Caco-2 (cell line): ENCODE measurements at regions of chr2 and their contacts with region 1.

Region 1: GRCh38 chr2:186589612-186590349 is at the start of gene ITGAV:
- DNase-seq: peak; percentile 96 to 98
- H3K4me3 ChIP-seq: peak within 1 kb of the TSS; percentile 98
- H3K4me3 Mint-ChIP-seq: peak within 1 kb of the TSS; percentile 86
- H3K27ac Mint-ChIP-seq: peak within 1 kb of the TSS; percentile 46
- H3K4me1 ChIP-seq: peaks cover 25% of the 10 kb centered on the region
- H3K4me1 Mint-ChIP-seq: peaks cover 28% of the 10 kb centered on the region
- H3K27me3 ChIP-seq: no peaks in the 10 kb centered on the region
- H3K27me3 Mint-ChIP-seq: no peaks in the 10 kb centered on the region
- CTCF ChIP-seq: no peak
- total RNA-seq, gene ITGAV: 42.6 and 49.5 TPM in 2 replicates

Region 2: DNA sequence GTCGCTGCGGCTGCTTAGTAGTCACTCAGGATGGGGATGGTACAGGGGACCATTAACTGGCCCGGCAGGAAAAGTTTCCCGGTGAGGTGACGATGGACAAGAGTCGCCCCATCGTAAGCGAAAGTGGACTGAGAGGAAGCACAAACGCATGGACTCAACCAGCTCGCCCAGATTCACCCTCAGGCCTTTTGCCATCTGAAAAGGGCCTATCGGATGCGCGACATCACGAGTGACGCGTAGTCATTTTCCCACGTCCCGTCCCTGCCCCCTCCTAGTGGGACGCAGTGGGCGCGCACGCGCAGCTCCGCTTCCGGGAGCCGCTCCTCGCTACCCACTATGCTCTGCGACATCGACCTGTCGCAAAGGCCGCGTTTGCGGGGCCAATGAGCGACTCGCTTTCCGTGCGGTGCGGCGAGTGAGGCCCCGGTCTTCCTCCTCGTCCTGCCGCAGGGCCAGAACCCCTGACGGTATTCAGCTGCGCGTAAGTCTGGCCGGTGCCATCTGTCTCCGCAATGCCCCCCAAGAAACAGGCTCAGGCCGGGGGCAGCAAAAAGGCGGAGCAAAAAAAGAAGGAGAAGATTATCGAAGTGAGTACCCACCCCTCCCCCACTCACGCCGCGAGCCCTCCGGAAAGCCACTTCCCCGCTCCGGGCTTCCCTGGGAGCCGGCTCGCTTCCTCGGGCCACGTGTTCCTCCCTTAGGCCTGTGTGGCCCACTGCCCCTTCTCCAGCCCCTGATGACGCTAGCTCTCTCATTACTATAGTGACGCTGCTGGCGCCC is 103.7 kb before region 1 on chr2 and contains the start of gene ZC3H15:
- CTCF ChIA-PET with region 1: interaction called, 4 read pairs
- POLR2A ChIA-PET with region 1: interaction called, 19 read pairs
- intact Hi-C with region 1: loop called (anchors 1 kb)
- DNase-seq: peak; percentile 97 to 98
- H3K4me3 ChIP-seq: peak within 1 kb of the TSS; percentile 86
- H3K4me3 Mint-ChIP-seq: peak within 1 kb of the TSS; percentile 96
- H3K27ac Mint-ChIP-seq: peak within 1 kb of the TSS; percentile 97
- H3K4me1 ChIP-seq: peaks cover 23% of the 10 kb centered on the region
- H3K4me1 Mint-ChIP-seq: peaks cover 27% of the 10 kb centered on the region
- H3K27me3 ChIP-seq: no peaks in the 10 kb centered on the region
- H3K27me3 Mint-ChIP-seq: no peaks in the 10 kb centered on the region
- CTCF ChIP-seq: no peak
- total RNA-seq, gene ZC3H15: 97.2 and 98.1 TPM in 2 replicates

Region 3: GRCh38 chr2:186503848-186504606 is 85.8 kb before region 1 on chr2:
- CTCF ChIA-PET with region 1: interaction called, 4 read pairs
- POLR2A ChIA-PET with region 1: interaction called, 4 read pairs
- intact Hi-C with region 1: loop called (anchors 1 kb)
- DNase-seq: no peak
- H3K4me3 ChIP-seq: no peak overlapping the region
- H3K4me3 Mint-ChIP-seq: no peak overlapping the region
- H3K27ac Mint-ChIP-seq: no peak overlapping the region
- H3K4me1 ChIP-seq: 0 out of 2 replicates have a peak, but pooled peaks cover 4% of the 10 kb centered on the region
- H3K4me1 Mint-ChIP-seq: peaks cover 9% of the 10 kb centered on the region
- H3K27me3 ChIP-seq: no peaks in the 10 kb centered on the region
- H3K27me3 Mint-ChIP-seq: no peaks in the 10 kb centered on the region
- CTCF ChIP-seq: peak; percentile 41 to 62

Region 4: GRCh38 chr2:186532891-186533290 is 56.9 kb before region 1 on chr2:
- CTCF ChIA-PET with region 1: no interaction called
- POLR2A ChIA-PET with region 1: interaction called, 5 read pairs
- intact Hi-C with region 1: loop called (anchors 5 kb)
- DNase-seq: no peak
- H3K4me3 ChIP-seq: no peak overlapping the region
- H3K4me3 Mint-ChIP-seq: no peak overlapping the region
- H3K27ac Mint-ChIP-seq: no peak overlapping the region
- H3K4me1 ChIP-seq: peaks cover 38% of the 10 kb centered on the region
- H3K4me1 Mint-ChIP-seq: peaks cover 18% of the 10 kb centered on the region
- H3K27me3 ChIP-seq: no peaks in the 10 kb centered on the region
- H3K27me3 Mint-ChIP-seq: no peaks in the 10 kb centered on the region
- CTCF ChIP-seq: no peak

Region 5: DNA sequence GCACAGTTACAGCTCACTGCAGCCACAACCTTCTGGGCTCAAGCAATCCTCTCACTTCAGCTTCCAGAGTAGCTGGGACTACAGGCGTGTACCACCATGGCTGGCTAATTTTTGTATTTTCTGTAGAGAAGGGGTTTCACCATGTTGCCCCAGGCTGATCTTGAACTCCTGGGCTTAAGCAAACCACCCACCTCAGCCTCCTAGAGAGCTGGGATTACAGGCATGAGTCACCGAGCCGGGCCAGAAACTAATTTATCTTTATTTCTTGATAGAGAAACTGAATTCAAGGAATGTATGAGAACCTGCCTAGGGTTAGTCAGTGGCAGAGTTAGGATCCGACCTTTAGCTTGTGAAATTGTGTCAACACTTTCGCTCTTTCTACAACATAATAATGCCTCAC is 19.2 kb before region 1 on chr2:
- CTCF ChIA-PET with region 1: interaction called, 3 read pairs
- POLR2A ChIA-PET with region 1: interaction called, 9 read pairs
- intact Hi-C with region 1: loop called (anchors 1 kb)
- DNase-seq: no peak
- H3K4me3 ChIP-seq: no peak overlapping the region
- H3K4me3 Mint-ChIP-seq: no peak overlapping the region
- H3K27ac Mint-ChIP-seq: no peak overlapping the region
- H3K4me1 ChIP-seq: peaks cover 24% of the 10 kb centered on the region; the same call in 1 of the 2 replicates
- H3K4me1 Mint-ChIP-seq: peaks cover 27% of the 10 kb centered on the region
- H3K27me3 ChIP-seq: no peaks in the 10 kb centered on the region
- H3K27me3 Mint-ChIP-seq: no peaks in the 10 kb centered on the region
- CTCF ChIP-seq: no peak

Region 6: DNA sequence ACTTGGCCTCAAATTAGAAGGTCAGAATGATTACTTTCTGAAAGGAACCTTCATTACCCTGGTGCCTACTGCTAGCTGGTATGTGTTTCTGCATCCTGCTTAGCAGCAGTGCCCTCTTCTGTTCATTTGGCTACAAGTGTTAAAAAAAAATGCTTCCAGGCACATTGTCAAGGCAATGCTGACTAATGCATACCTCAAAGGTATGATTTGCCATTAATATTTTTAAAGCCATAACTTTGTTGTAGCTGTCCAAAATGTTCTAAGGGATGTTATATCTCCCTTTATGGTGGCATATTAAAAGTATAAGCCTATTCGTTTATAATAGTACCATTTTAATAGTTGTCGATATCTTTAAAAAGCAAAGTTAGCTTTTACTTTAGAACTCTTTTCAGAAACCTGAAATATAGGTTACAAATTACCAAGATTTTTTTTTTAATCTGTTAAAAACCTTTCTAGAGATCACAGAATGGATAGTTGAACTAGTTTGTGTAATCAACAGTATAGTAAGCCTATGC is 52.1 kb after region 1 on chr2:
- CTCF ChIA-PET with region 1: interaction called, 10 read pairs
- POLR2A ChIA-PET with region 1: interaction called, 7 read pairs
- intact Hi-C with region 1: loop called (anchors 2 kb)
- DNase-seq: peak; percentile 45 to 67
- H3K4me3 ChIP-seq: no peak overlapping the region
- H3K4me3 Mint-ChIP-seq: no peak overlapping the region
- H3K27ac Mint-ChIP-seq: no peak overlapping the region
- H3K4me1 ChIP-seq: no peaks in the 10 kb centered on the region
- H3K4me1 Mint-ChIP-seq: peaks cover 14% of the 10 kb centered on the region
- H3K27me3 ChIP-seq: no peaks in the 10 kb centered on the region
- H3K27me3 Mint-ChIP-seq: no peaks in the 10 kb centered on the region
- CTCF ChIP-seq: peak; percentile 60 to 82

Region 7: DNA sequence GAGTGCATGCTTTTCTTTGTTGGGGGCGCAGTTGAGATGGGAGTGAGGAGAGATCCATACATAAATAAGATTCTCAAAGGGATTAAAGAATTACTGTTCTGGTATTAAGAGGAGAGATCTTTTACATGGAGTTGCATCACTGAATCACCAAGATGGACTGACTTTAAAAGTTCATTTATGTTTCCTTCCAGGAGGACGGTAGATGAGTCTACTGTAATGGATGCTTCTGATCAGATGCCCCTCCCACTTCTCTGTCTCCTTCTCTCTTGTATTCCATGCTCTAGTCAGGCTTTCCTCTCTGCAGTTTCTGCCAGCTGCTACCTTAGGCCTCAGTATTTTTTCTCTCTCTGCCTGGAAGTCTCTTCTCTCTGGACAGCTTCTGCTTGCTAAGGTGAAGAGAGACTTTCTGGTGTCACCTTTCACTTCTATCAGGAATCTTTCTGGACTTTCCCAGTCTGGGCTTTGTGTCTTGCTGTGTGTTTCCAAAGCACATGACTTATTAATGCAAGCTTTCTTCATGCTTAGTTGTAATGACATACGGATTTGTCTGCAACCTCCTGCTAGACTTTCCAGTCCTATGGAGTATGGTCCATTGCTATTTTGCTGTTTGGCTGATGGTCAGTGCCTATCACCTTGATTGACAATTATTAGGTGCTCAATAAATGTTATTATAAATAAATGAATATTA is 127.7 kb after region 1 on chr2:
- CTCF ChIA-PET with region 1: no interaction called
- POLR2A ChIA-PET with region 1: no interaction called
- intact Hi-C with region 1: no loop called
- DNase-seq: no peak
- H3K4me3 ChIP-seq: no peak overlapping the region
- H3K4me3 Mint-ChIP-seq: no peak overlapping the region
- H3K27ac Mint-ChIP-seq: no peak overlapping the region
- H3K4me1 ChIP-seq: no peaks in the 10 kb centered on the region
- H3K4me1 Mint-ChIP-seq: no peaks in the 10 kb centered on the region
- H3K27me3 ChIP-seq: no peaks in the 10 kb centered on the region
- H3K27me3 Mint-ChIP-seq: no peaks in the 10 kb centered on the region
- CTCF ChIP-seq: no peak

Region 8: DNA sequence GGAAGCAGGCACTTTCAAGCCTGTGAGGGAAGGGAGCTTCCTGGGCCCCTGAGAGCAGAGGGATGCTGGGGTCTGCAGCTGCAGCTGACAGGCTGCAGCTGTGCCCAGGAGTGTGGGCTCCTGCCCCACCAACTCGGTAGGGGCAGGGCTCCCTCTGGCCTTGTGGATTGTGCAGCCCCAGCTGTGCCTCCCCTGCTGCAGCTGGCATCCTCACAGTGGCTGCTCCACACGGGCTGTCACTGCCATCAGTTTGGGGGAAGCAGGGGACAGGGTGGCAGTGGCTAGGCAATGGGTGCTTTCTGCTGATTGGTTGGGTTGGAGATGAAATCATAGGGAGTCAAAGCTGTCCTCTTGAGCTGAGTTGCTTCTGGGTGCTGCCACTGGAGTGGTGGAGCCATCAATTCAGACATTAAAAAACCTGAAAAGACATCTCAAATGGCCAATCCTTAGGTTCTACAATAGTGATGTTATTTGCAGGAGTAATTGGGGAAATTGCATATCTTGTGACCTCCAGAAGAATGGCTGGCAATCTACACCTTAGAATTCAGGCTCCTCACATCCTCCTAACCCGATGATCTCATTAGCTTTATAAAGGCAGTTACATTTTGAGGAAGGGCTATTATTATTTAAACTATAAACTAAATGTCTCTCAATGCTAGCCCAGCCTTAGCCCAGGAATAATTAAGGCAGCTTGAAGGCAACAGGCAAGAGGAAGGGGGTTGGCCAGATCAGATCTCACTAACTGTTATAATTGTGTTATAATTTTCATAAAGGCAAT is 145.4 kb after region 1 on chr2:
- CTCF ChIA-PET with region 1: no interaction called
- POLR2A ChIA-PET with region 1: no interaction called
- intact Hi-C with region 1: no loop called
- DNase-seq: no peak
- H3K4me3 ChIP-seq: no peak overlapping the region
- H3K4me3 Mint-ChIP-seq: no peak overlapping the region
- H3K27ac Mint-ChIP-seq: no peak overlapping the region
- H3K4me1 ChIP-seq: no peaks in the 10 kb centered on the region
- H3K4me1 Mint-ChIP-seq: no peaks in the 10 kb centered on the region
- H3K27me3 ChIP-seq: no peaks in the 10 kb centered on the region
- H3K27me3 Mint-ChIP-seq: no peaks in the 10 kb centered on the region
- CTCF ChIP-seq: no peak